CD4-positive, alpha-beta memory T cell (primary cell): ENCODE measurements at regions of chr14 and their contacts with region 1.

Region 1: GRCh38 chr14:70897464-70897863 is 9.8 kb upstream of the PCNX1 start:
- DNase-seq: no peak
- H3K4me3 ChIP-seq: no peak overlapping the region
- H3K4me3 Mint-ChIP-seq: no peak overlapping the region
- H3K27ac ChIP-seq: no peak overlapping the region
- H3K27ac Mint-ChIP-seq: no peak overlapping the region
- H3K4me1 ChIP-seq: peaks cover 35% of the 10 kb centered on the region
- H3K4me1 Mint-ChIP-seq: peaks cover 38 to 43% (median 40%) of the 10 kb centered on the region in 4 donors
- H3K27me3 ChIP-seq: no peaks in the 10 kb centered on the region
- H3K27me3 Mint-ChIP-seq: no peaks in the 10 kb centered on the region

Region 2: DNA sequence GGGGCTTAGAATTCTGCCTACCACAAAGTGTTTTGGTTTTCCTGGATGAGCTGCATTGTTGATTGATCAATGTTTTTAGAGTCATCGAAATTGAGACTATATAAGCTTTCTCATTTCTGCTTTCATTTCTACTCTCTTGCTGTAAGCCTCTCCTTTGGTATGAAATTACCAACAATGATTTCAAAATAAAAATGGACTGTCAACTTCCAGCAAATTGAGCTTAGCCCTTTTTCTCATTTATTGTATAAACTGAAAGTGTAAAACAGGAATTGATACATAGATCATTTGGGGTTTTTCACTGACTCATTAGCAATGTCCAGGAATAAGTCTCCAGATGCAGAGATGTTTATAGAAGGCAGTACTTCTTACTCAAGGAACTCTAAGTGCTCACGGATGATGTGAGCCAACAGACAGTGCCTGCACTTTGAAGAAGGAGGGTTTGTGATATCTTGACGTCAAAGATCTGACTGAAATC is 10.2 kb before region 1 on chr14:
- CTCF ChIA-PET with region 1: interaction called, 12 read pairs
- POLR2A ChIA-PET with region 1: interaction called, 6 read pairs
- intact Hi-C with region 1: no loop called
- DNase-seq: peak in 3 of 5 donors; percentile 27 to 51 (median 30)
- H3K4me3 ChIP-seq: peak overlapping the region; percentile 11 to 42
- H3K4me3 Mint-ChIP-seq: peak overlapping the region; percentile 69 to 90 (median 76)
- H3K27ac ChIP-seq: peak overlapping the region; percentile 55
- H3K27ac Mint-ChIP-seq: peak overlapping the region; percentile 87 to 97 (median 91)
- H3K4me1 ChIP-seq: peaks cover 96% of the 10 kb centered on the region
- H3K4me1 Mint-ChIP-seq: peaks cover 66 to 99% (median 86%) of the 10 kb centered on the region in 4 donors
- H3K27me3 ChIP-seq: no peaks in the 10 kb centered on the region
- H3K27me3 Mint-ChIP-seq: no peaks in the 10 kb centered on the region